ENCODE measurements at regions of chr10 and their contacts with region 1.

Region 1: GRCh38 chr10:91632671-91633550 is at the start of gene PPP1R3C:
- ATAC-seq: peak; percentile 88 to 98 (median 97)
- H3K4me3 ChIP-seq: peak within 1 kb of the TSS; percentile 46 to 61 (median 51)
- H3K27ac ChIP-seq: peak within 1 kb of the TSS in 1 of 2 donors; percentile 30
- H3K4me1 ChIP-seq: peaks cover 15 to 17% of the 10 kb centered on the region in 2 donors
- total RNA-seq, gene PPP1R3C: 5.3 to 41.6 (median 18.4) TPM

Region 2: DNA sequence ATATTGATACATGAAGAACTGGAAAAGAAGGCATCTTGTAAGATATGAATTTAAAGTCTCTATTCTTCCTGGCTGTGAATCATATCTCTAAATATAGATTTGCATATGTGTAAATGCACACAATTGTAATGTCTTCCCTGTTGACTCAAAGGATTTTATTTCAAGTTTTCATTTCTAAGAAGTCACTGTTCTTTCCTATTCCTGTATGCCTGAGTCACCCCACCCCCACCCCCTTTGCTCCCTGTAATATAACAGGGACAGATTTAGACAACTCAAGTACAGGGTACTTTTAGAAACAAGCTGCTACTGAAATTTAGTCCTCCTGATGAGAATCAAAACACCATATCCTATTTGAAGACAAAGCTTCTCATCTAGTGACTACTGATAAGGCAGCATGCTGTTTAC is 265.8 kb before region 1 on chr10:
- in situ Hi-C with region 1: no loop called
- ATAC-seq: peak in 3 of 8 experiments; percentile 79 to 95 (median 89)
- H3K4me3 ChIP-seq: no peak overlapping the region
- H3K27ac ChIP-seq: no peak overlapping the region
- H3K4me1 ChIP-seq: no peaks in the 10 kb centered on the region

Region 3: DNA sequence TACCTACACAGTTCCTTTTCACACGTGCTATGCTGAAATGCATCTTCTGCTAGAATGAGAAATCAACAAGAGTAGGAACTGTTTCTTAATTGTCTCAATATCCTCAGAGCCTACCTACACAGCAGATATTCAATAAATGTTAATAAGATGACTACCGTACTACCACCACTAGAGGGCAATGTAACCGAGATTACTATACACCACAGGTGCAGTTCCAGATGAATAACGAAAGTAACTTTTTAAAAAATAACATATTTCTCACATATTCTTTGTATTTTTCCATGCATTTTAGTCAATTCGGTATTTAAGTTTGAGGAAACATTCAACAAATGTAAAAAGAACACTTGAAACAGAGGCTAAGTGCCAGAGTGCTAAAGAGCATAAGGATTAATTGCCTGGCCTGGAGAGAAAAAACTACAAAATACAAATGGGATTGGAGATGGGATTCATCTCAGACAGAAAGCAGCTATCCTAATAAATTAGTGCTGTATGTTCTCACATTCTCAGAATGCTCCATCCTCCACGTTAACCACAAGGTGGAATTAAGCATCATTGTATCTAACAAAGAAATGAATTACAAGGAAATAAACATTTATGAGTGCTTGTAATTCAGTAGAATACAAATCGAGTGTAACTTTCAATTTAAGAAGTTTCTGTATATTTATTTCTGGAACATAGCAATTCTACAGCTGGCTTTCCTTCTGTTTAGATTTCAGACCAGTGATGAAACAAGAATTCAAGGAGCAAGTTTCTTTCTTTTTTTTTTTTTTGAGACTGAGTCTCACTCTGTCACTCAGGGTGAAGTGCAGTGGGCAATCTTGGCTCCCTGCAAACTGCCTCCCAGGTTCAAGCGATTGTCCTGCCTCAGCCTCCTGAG is 243.0 kb before region 1 on chr10:
- in situ Hi-C with region 1: loop called in 2 of 9 experiments (anchors 25 kb)
- ATAC-seq: peak in 7 of 8 experiments; percentile 51 to 93 (median 71)
- H3K4me3 ChIP-seq: no peak overlapping the region
- H3K27ac ChIP-seq: no peak overlapping the region
- H3K4me1 ChIP-seq: no peaks in the 10 kb centered on the region

Region 4: DNA sequence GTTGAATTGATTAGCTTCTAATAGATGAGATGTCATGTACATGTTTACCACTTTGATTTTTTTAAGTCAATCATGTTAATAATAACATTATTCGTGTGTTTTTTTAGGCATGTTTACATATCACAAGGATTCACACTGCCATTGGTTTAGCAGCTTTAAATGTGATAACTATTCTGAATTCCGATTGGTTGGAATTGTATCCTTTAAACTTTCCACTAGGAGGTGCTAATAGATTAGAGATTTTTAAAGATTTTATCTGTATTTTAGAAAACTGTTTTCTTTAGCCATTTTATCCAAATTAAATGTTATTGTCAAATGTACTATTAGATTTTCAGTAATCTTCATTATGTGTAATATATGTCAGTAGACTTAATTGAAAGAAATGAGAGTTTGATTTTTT is 139.6 kb before region 1 on chr10:
- in situ Hi-C with region 1: loop called in 3 of 9 experiments (anchors 10 to 25 kb)
- ATAC-seq: peak in 3 of 8 experiments; percentile 30 to 35 (median 35)
- H3K4me3 ChIP-seq: no peak overlapping the region
- H3K27ac ChIP-seq: no peak overlapping the region
- H3K4me1 ChIP-seq: no peaks in the 10 kb centered on the region

Region 5: GRCh38 chr10:91955114-91955513 is 322.2 kb after region 1 on chr10:
- in situ Hi-C with region 1: no loop called
- ATAC-seq: no peak
- H3K4me3 ChIP-seq: no peak overlapping the region
- H3K27ac ChIP-seq: no peak overlapping the region
- H3K4me1 ChIP-seq: peaks cover 3 to 4% of the 10 kb centered on the region in 2 donors